Activated naive CD4-positive, alpha-beta T cell treated with anti-CD3 and anti-CD28 coated beads for 36 hours (primary cell): ENCODE measurements at regions of chr3 and their contacts with region 1.

Region 1: GRCh38 chr3:5160928-5161858 is 26.3 kb upstream of the EDEM1 start:
- DNase-seq: peak; percentile 26
- H3K4me3 Mint-ChIP-seq: no peak overlapping the region
- H3K27ac Mint-ChIP-seq: peak overlapping the region; percentile 54
- H3K4me1 Mint-ChIP-seq: peaks cover 72% of the 10 kb centered on the region
- H3K27me3 Mint-ChIP-seq: no peaks in the 10 kb centered on the region

Region 2: GRCh38 chr3:5187156-5187919 is 26.1 kb after region 1 on chr3 and contains the start of gene EDEM1:
- CTCF ChIA-PET with region 1: no interaction called
- intact Hi-C with region 1: loop called (anchors 1 kb)
- DNase-seq: peak; percentile 95
- H3K4me3 Mint-ChIP-seq: peak within 1 kb of the TSS; percentile 96
- H3K27ac Mint-ChIP-seq: peak within 1 kb of the TSS; percentile 99
- H3K4me1 Mint-ChIP-seq: peaks cover 27% of the 10 kb centered on the region
- H3K27me3 Mint-ChIP-seq: no peaks in the 10 kb centered on the region
- total RNA-seq, gene EDEM1: 137 to 138 TPM